A673 (cell line): ENCODE measurements at regions of chr12 and their contacts with region 1.

Region 1: DNA sequence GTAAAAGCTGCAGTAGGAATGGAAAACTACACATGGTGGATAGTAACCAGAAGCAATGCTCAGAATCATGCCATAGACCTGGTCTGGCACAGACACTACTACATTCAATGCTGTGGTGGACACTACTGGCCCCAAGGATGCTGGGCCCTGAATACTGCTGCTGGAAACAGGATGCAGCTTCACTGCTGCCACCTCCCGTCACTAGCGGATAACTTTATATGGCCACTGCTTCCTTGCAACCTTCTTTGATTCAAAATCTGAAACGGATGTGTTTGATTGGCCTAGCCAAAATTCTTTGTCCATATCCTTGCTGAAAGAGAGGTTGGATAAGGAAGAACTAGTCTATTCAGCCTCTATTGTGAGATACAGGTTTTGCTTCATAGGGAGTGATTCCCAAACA is 30.7 kb downstream of the ADCY6 start:
- DNase-seq: no peak
- H3K4me3 ChIP-seq: no peak overlapping the region
- H3K27ac ChIP-seq: no peak overlapping the region
- H3K4me1 ChIP-seq: no peaks in the 10 kb centered on the region
- H3K27me3 ChIP-seq: no peaks in the 10 kb centered on the region
- CTCF ChIP-seq: no peak

Region 2: DNA sequence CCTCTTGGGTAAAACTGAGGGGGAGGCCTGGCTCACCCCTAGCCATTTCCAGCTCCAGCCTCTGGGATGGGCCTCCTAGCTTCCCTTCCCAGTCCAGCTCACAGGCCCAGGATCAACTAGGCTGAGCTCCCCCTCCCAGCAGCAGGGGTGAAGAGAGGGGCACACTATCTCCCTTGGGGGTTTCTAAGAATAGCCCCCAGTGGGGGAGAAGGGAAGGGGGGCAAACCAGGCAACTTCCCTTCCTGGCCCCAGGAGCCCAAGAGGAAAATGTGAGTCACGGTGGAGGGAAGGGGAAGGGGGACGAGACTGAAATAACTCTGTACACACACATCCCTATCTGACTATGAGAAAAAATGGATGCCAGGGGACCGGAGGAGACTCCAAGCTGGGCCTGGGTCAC is 21.6 kb after region 1 on chr12:
- CTCF ChIA-PET with region 1: interaction called, 10 read pairs
- POLR2A ChIA-PET with region 1: no interaction called
- intact Hi-C with region 1: no loop called
- DNase-seq: peak; percentile 50
- H3K4me3 ChIP-seq: no peak overlapping the region
- H3K27ac ChIP-seq: peak overlapping the region; percentile 16
- H3K4me1 ChIP-seq: peaks cover 10% of the 10 kb centered on the region
- H3K27me3 ChIP-seq: no peaks in the 10 kb centered on the region
- CTCF ChIP-seq: no peak

Region 3: DNA sequence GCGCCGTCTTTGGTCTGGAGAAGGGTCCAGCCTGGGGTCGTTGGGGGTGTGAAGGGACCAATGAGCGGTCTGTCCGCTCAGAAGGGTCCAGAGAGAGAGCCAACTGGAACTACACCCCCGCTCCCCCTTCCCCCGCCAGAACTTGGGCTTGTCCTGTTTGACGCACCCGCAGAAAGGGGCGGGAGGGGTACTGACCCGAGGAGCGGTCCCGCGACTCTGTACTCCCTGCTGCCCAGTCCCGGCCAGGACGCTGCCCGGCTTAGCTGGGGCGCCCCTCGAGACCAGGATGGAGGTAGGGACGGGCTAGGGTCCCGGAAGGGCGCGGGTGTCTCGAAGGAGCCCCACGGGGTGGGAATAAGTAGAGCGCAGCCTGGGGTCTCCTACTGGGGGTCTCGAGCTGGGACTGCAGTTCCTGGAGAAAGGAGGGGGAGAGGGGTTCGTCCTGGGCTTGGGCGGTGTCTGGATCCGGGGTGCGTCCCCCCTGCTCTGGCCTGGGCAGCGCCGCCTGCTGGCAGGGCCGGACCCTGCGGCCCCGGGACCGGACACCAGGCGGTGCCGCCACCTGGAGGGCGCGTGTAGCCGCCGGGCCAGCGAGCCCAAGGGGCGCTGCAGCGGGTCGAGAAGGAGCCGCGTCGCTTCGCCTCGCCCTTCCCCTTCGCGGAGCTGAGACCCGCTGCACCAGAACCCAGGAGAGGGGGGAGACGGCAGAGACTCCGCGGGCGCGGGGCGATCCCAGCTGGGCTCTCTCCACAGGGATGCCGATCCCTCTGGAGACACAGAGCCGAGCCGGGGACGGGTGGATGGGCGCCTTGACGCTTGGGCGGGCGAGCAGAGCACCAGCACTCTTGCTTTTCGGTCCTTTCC is 56.3 kb after region 1 on chr12:
- CTCF ChIA-PET with region 1: interaction called, 20 read pairs
- POLR2A ChIA-PET with region 1: no interaction called
- intact Hi-C with region 1: no loop called
- DNase-seq: peak; percentile 73
- H3K4me3 ChIP-seq: peak overlapping the region; percentile 68
- H3K27ac ChIP-seq: peak overlapping the region; percentile 54
- H3K4me1 ChIP-seq: peaks cover 23% of the 10 kb centered on the region
- H3K27me3 ChIP-seq: no peaks in the 10 kb centered on the region
- CTCF ChIP-seq: peak; percentile 84

Region 4: DNA sequence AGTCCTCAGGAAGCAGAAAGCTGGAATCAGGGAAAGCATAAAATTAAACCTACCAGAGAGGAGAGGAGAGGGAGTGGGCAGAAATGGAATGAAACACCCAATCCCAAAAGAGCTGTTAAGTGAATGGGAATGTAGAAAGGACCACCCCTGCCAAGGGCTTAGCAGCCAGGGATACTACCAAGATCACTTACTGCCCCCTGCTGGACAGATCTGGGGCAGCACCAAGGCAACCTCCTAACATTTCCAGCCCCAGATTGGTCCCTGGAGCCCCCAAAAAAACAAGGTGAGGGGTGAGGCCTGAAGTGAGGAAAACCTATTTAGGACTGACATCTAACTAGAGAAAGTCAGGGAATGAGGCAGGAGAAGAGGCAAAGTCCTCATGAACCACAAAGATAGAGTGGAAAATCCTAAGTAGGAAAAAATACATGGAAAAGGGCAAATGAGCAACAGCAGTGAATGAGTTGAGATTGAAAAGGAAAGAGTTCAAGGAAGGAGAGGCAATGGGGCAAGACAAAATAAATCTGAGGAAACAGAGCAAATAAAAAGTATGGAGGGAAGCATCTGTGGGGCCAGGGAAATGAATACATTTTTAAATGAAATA is 178.3 kb after region 1 on chr12:
- CTCF ChIA-PET with region 1: no interaction called
- POLR2A ChIA-PET with region 1: no interaction called
- intact Hi-C with region 1: loop called (anchors 10 kb)
- DNase-seq: peak; percentile 78
- H3K4me3 ChIP-seq: no peak overlapping the region
- H3K27ac ChIP-seq: no peak overlapping the region
- H3K4me1 ChIP-seq: no peaks in the 10 kb centered on the region
- H3K27me3 ChIP-seq: no peaks in the 10 kb centered on the region
- CTCF ChIP-seq: peak; percentile 96

Region 5: DNA sequence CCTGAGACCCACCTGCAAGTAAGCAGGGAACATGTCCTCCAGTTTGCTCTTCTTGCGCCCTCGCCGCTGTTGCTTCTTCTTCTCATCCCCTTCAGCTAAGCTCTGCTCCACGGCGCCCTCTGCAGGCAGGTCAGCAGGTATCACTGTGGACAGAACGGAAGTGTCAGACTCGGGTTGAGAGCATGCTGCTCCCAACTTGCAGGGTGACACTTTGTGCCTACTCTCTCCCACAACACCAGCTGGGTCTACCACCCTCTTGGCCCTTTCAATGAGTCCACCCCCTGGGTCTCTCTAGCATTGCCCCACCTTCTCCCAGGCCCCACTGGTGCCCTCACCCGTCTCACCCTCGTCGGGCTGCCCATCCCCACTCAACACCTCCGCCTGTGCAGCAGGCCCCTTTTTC is 285.6 kb after region 1 on chr12:
- CTCF ChIA-PET with region 1: no interaction called
- POLR2A ChIA-PET with region 1: no interaction called
- intact Hi-C with region 1: no loop called
- DNase-seq: peak; percentile 77
- H3K4me3 ChIP-seq: no peak overlapping the region
- H3K27ac ChIP-seq: no peak overlapping the region
- H3K4me1 ChIP-seq: no peaks in the 10 kb centered on the region
- H3K27me3 ChIP-seq: no peaks in the 10 kb centered on the region
- CTCF ChIP-seq: peak; percentile 83